ENCODE measurements at regions of chr15 and their contacts with region 1.

Region 1: GRCh38 chr15:65060641-65061397 is 7.0 kb downstream of the RASL12 start:
- DNase-seq: no peak
- H3K4me3 ChIP-seq: no peak overlapping the region
- H3K27ac ChIP-seq: no peak overlapping the region
- H3K4me1 ChIP-seq: no peaks in the 10 kb centered on the region
- H3K27me3 ChIP-seq: peaks cover 7 to 12% of the 10 kb centered on the region in 2 experiments
- CTCF ChIP-seq: no peak
- POLR2A ChIP-seq: no peak

Region 2: GRCh38 chr15:64527263-64527984 is 533.4 kb before region 1 on chr15:
- CTCF ChIA-PET with region 1: no interaction called
- POLR2A ChIA-PET with region 1: no interaction called
- dilution Hi-C with region 1: no loop called
- intact Hi-C with region 1: no loop called
- DNase-seq: peak; percentile 55
- H3K4me3 ChIP-seq: no peak overlapping the region
- H3K27ac ChIP-seq: peak overlapping the region; percentile 9
- H3K4me1 ChIP-seq: peaks cover 29% of the 10 kb centered on the region
- H3K27me3 ChIP-seq: no peaks in the 10 kb centered on the region
- CTCF ChIP-seq: no peak
- POLR2A ChIP-seq: no peak

Region 3: DNA sequence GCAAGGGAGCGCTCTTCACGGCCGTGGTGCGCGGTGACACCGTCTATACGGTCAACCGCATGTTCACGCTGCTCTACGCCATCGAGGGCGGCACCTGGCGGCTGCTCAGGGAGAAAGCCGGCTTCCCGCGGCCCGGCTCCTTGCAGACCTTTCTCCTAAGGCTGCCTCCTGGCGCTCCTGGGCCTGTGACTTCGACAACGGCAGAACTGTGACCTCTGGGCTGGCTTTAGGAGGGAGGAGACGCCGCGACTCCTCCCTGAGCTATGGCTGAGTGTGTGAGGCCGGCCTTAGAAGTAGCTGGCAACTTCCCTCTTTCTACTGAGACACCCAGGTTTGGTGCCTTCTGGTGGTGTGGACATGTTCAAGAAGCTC is 17.1 kb after region 1 on chr15:
- CTCF ChIA-PET with region 1: interaction called, 89 read pairs
- POLR2A ChIA-PET with region 1: no interaction called
- dilution Hi-C with region 1: no loop called
- intact Hi-C with region 1: no loop called
- DNase-seq: peak; percentile 58
- H3K4me3 ChIP-seq: no peak overlapping the region
- H3K27ac ChIP-seq: no peak overlapping the region
- H3K4me1 ChIP-seq: no peaks in the 10 kb centered on the region
- H3K27me3 ChIP-seq: peaks cover 34 to 35% of the 10 kb centered on the region in 2 experiments
- CTCF ChIP-seq: peak; percentile 60 to 85
- POLR2A ChIP-seq: no peak

Measured in endothelial cell of umbilical vein (primary cell).